ENCODE measurements at regions of chr15 and their contacts with region 1.

Region 1: DNA sequence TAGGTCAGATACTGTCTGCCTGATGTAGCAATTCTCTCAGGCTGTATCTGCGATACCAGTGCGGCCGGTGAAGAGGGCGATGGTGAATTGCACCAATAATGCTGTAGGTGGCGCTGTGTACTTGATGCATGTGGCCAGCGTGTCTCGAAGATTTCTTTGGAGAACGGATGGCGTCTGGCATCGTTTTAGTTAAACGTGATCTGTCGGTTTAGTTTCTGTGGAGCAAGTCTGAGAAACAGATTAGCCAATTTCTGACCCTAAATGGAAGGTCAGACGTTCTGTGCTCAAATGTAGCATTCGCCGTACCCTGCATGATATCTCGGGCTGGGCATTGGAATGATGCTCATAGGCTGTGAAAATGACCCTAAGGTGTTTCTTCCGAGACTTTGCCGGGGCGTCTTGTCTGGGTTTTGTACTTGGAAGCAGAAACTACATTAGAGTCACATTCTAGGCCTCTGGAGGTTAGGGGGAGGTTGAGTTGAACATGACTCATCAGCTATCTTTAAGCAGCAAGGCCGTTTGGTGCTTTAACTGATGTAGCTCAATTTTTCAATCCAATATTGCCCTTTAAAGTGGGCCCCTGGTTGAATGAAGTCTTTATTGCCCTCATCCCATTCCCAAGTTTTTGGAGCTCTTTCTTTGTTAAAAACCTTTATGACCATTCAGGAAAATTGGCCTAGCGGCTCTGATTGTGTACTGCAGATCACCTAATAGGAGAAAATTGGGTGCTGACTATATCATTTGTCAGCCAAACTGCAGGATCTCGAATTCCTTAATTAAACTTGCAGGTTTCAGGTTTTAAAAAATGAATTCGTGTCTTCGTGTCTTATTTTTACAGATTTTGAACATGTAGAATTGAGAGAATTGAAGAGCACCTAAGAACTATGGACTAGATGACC is 80.0 kb downstream of the SQOR start:
- DNase-seq: peak; percentile 70 to 79
- H3K4me3 ChIP-seq: no peak overlapping the region
- H3K4me3 Mint-ChIP-seq: no peak overlapping the region
- H3K27ac Mint-ChIP-seq: no peak overlapping the region
- H3K4me1 ChIP-seq: no peaks in the 10 kb centered on the region
- H3K4me1 Mint-ChIP-seq: peaks cover 5% of the 10 kb centered on the region
- H3K27me3 ChIP-seq: no peaks in the 10 kb centered on the region
- H3K27me3 Mint-ChIP-seq: peaks cover 5% of the 10 kb centered on the region
- CTCF ChIP-seq: peak; percentile 81 to 87

Region 2: GRCh38 chr15:45790325-45790943 is 75.6 kb after region 1 on chr15:
- CTCF ChIA-PET with region 1: interaction called, 7 read pairs
- POLR2A ChIA-PET with region 1: no interaction called
- intact Hi-C with region 1: loop called (anchors 1 kb)
- DNase-seq: peak in 1 of 2 experiments; percentile 53
- H3K4me3 ChIP-seq: no peak overlapping the region
- H3K4me3 Mint-ChIP-seq: no peak overlapping the region
- H3K27ac Mint-ChIP-seq: no peak overlapping the region
- H3K4me1 ChIP-seq: peaks cover 13% of the 10 kb centered on the region
- H3K4me1 Mint-ChIP-seq: no peaks in the 10 kb centered on the region
- H3K27me3 ChIP-seq: no peaks in the 10 kb centered on the region
- H3K27me3 Mint-ChIP-seq: no peaks in the 10 kb centered on the region
- CTCF ChIP-seq: peak; percentile 41 to 44

Region 3: GRCh38 chr15:45802140-45802539 is 87.3 kb after region 1 on chr15:
- CTCF ChIA-PET with region 1: interaction called, 13 read pairs
- POLR2A ChIA-PET with region 1: no interaction called
- intact Hi-C with region 1: loop called (anchors 1 kb)
- DNase-seq: peak in 1 of 2 experiments; percentile 34
- H3K4me3 ChIP-seq: no peak overlapping the region
- H3K4me3 Mint-ChIP-seq: no peak overlapping the region
- H3K27ac Mint-ChIP-seq: no peak overlapping the region
- H3K4me1 ChIP-seq: peaks cover 8% of the 10 kb centered on the region; the same call in 1 of the 2 replicates
- H3K4me1 Mint-ChIP-seq: peaks cover 8% of the 10 kb centered on the region
- H3K27me3 ChIP-seq: no peaks in the 10 kb centered on the region
- H3K27me3 Mint-ChIP-seq: no peaks in the 10 kb centered on the region
- CTCF ChIP-seq: peak in 1 of 2 experiments; percentile 12

Region 4: DNA sequence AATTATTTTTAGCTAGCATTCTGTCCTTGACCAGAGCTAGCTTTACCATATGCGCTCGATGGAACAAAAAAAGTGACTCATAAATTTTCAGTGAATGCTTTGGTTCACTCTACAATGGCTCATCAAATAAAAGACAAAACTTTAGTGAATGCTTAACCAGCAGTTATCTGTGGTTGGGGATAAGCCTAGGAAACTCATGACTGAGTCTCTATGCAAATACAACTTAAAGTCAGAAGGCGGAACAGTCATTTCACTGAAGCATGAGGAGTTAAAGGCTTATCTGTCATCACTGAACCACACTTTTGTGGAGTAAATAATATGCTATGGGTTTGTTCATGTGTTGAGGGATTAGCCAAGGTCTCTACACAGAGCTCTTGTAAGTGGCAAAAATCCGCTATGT is 228.4 kb after region 1 on chr15:
- CTCF ChIA-PET with region 1: no interaction called
- POLR2A ChIA-PET with region 1: no interaction called
- intact Hi-C with region 1: loop called (anchors 10 kb)
- DNase-seq: peak; percentile 38 to 70
- H3K4me3 ChIP-seq: no peak overlapping the region
- H3K4me3 Mint-ChIP-seq: no peak overlapping the region
- H3K27ac Mint-ChIP-seq: no peak overlapping the region
- H3K4me1 ChIP-seq: peaks cover 29% of the 10 kb centered on the region
- H3K4me1 Mint-ChIP-seq: peaks cover 9% of the 10 kb centered on the region
- H3K27me3 ChIP-seq: no peaks in the 10 kb centered on the region
- H3K27me3 Mint-ChIP-seq: no peaks in the 10 kb centered on the region
- CTCF ChIP-seq: no peak

Region 5: DNA sequence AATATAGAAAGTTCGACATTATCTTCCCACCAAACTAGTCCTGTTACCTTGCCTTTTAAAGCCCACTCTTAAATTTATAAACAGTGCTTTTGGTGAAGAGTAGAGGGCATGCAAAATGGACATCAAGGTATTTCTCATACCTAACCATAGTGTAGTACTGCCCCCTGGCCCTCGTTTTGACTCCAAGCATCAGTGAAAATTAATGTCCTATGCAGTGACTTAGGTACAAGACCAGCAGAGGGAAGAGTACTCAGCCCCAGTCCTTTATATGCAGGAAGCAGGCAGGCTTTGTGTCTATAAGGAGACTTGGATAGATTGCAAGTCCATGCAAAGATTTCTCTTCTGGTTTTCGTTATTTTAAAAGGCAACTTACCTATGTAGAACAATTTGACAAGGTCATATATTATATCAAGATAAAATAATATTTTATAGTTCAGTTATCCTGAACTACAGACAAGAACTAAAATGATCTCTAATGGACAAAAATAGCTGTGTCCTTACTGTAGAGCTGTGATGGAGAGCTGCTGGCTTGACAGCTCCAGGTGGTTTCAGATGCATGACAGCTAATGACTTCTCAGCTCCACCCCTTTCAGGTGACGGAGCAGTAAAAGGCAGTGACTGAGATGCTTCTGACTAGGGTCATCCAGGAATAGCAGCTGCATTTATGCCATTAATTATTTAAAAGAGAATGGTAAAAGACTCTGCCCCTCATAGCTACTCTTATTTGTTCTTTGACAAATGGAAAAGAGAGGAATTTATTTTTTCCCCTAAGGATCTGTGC is 566.1 kb after region 1 on chr15:
- CTCF ChIA-PET with region 1: no interaction called
- POLR2A ChIA-PET with region 1: no interaction called
- intact Hi-C with region 1: loop called (anchors 2 kb)
- DNase-seq: peak; percentile 38 to 41
- H3K4me3 ChIP-seq: no peak overlapping the region
- H3K4me3 Mint-ChIP-seq: no peak overlapping the region
- H3K27ac Mint-ChIP-seq: no peak overlapping the region
- H3K4me1 ChIP-seq: no peaks in the 10 kb centered on the region
- H3K4me1 Mint-ChIP-seq: no peaks in the 10 kb centered on the region
- H3K27me3 ChIP-seq: no peaks in the 10 kb centered on the region
- H3K27me3 Mint-ChIP-seq: no peaks in the 10 kb centered on the region
- CTCF ChIP-seq: peak; percentile 35 to 41

Region 6: GRCh38 chr15:46312133-46312740 is 597.4 kb after region 1 on chr15:
- CTCF ChIA-PET with region 1: no interaction called
- POLR2A ChIA-PET with region 1: no interaction called
- intact Hi-C with region 1: loop called (anchors 1 kb)
- DNase-seq: peak; percentile 66 to 77
- H3K4me3 ChIP-seq: no peak overlapping the region
- H3K4me3 Mint-ChIP-seq: no peak overlapping the region
- H3K27ac Mint-ChIP-seq: no peak overlapping the region
- H3K4me1 ChIP-seq: no peaks in the 10 kb centered on the region
- H3K4me1 Mint-ChIP-seq: no peaks in the 10 kb centered on the region
- H3K27me3 ChIP-seq: no peaks in the 10 kb centered on the region
- H3K27me3 Mint-ChIP-seq: no peaks in the 10 kb centered on the region
- CTCF ChIP-seq: peak; percentile 81 to 83

Measured in Caco-2 (cell line).